ENCODE measurements at regions of chr17 and their contacts with region 1.

Region 1: DNA sequence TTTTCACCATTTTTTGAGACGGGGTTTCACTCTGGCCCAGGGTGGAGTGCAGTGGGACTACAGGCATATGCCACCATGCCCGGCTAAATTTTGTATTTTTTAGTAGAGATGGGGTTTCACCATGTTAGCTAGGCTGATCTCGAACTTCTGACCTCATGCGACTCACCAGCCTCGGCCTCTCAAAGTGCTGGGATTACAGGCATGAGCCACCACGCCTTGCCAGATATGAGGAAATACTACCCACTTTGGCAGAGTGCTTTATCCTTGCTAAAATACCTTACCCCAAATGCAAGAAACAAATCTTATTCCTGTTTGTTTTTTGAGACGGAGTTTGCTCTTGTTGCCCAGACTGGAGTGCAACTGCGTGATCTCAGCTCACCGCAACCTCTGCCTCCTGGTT is 62.9 kb upstream of the MGAT5B start:
- DNase-seq: no peak
- H3K4me3 ChIP-seq: no peak overlapping the region
- H3K27ac ChIP-seq: no peak overlapping the region
- H3K27me3 ChIP-seq: no peaks in the 10 kb centered on the region
- CTCF ChIP-seq: no peak

Region 2: DNA sequence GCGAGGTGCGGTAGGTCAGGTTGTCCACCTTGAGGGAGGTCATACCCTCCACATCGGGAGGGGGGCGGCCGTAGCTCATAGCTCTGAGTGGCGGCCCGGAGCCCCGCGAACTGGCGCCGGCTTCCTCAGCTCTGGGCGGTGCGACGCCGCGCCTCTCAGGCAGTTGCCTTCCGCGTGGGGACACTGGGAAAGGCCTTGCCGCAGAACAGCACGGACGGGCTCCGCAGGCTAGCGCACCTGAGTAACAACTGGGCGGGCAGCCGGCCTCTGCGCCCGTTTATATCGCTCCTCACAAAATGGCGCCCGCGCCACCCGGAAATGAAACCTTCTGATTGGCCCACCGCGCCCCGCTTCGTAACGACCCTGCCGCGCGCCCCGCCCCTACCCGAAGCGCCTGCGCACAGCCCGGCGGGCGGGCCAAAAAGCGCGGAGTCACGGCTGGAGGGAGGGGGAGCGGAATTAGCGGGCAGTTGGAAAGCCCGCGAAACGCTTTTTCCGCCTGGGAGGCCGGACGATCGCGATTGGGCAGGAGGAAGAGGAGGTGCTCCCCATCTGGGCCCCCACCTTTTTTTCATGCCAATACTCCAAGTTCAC is 68.1 kb before region 1 on chr17 and contains the start of gene SRSF2:
- CTCF ChIA-PET with region 1: no interaction called
- POLR2A ChIA-PET with region 1: interaction called, 11 read pairs
- DNase-seq: peak; percentile 97
- H3K4me3 ChIP-seq: peak within 1 kb of the TSS; percentile 96
- H3K27ac ChIP-seq: peak within 1 kb of the TSS; percentile 96
- H3K27me3 ChIP-seq: no peaks in the 10 kb centered on the region
- CTCF ChIP-seq: no peak
- polyA plus RNA-seq, gene SRSF2: 170 and 184 TPM in 2 replicates

Region 3: GRCh38 chr17:76781056-76781982 is 24.0 kb before region 1 on chr17:
- CTCF ChIA-PET with region 1: no interaction called
- POLR2A ChIA-PET with region 1: interaction called, 10 read pairs
- DNase-seq: no peak
- H3K4me3 ChIP-seq: no peak overlapping the region
- H3K27ac ChIP-seq: no peak overlapping the region
- H3K27me3 ChIP-seq: no peaks in the 10 kb centered on the region
- CTCF ChIP-seq: no peak